ENCODE measurements at regions of chr5 and their contacts with region 1.

Region 1: DNA sequence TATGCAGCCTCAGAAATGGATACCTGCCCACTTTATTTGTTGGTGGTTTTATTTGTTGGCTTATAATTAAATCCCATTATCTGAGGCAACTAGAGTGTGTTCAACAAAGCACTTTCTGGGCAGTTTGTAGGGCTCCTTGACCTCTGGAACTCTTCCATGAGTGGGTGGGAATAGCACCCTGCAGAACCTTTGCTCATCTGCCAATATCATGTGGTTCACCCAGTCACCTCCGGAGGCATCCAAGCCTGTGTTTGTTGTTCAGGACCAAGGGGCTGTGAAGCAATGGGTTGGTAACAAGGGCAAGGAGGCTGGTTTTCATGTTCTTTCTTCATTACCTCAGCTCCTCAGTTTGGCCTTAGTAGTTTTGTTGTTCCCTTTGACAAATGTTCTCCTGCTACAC is 314.0 kb downstream of the NDUFS4 start:
- DNase-seq: no peak

Region 2: DNA sequence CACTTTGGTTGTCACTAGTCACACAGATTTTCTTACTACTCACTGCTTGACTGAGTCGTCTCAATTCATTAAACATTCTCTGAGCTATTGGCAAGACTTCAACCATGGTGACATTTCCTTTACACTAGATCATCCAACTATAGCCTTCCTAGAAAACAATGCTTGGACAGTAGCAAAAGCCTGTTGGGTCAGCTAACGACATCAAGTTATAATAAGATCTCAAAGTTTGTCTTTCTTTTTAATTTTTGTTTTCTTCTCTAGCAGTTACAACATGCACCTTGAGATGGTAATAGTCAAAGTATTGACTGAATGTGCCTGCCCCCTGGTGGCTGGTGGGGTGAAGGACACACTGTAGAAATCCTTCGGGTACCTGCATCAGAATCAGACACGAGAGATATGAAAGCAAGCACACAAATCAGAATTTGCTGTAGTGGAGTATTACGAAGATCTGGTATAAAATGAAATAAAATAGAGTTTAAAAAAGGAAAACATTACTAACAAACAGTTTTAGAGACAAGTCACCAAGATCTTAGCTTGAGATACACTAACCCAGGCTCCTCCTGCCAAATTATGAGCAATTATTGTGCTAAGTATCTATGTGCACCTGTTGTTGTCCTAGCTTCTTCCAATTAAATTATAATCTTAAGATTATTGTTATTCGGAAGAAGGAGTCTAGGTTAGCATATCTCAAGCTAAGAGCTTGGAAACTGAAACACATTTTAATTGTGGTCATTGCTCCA is 354.8 kb after region 1 on chr5:
- intact Hi-C with region 1: loop called (anchors 10 kb)
- DNase-seq: peak; percentile 80